Activated T-helper 1 cell treated with anti-CD3 and anti-CD28 coated beads, Interleukin-12 subunit alpha, Interleukin-12 subunit beta, Interleukin-2, Interleukin-4 antibody, amounts not matched to agents 30 ng/mL and 10 ng/mL and 1 ng/mL, durations not matched to agents 14 hours and 24 hours and 36 hours (primary cell): ENCODE measurements at regions of chr7 and their contacts with region 1.

Region 1: GRCh38 chr7:66075590-66076461 is at the start of gene ASL:
- DNase-seq: peak; percentile 93
- H3K4me3 Mint-ChIP-seq: peak within 1 kb of the TSS; percentile 95
- H3K27ac Mint-ChIP-seq: peak within 1 kb of the TSS; percentile 72
- H3K4me1 Mint-ChIP-seq: peaks cover 19% of the 10 kb centered on the region
- H3K27me3 Mint-ChIP-seq: peaks cover 3% of the 10 kb centered on the region
- total RNA-seq, gene ASL: 36.6 and 44.9 TPM in 2 replicates

Region 2: GRCh38 chr7:65750511-65751344 is 325.1 kb before region 1 on chr7:
- intact Hi-C with region 1: loop called (anchors 1 kb)
- DNase-seq: peak; percentile 89
- H3K4me3 Mint-ChIP-seq: peak overlapping the region; percentile 100
- H3K27ac Mint-ChIP-seq: peak overlapping the region; percentile 97
- H3K4me1 Mint-ChIP-seq: peaks cover 11% of the 10 kb centered on the region
- H3K27me3 Mint-ChIP-seq: no peaks in the 10 kb centered on the region

Region 3: GRCh38 chr7:65872776-65873581 is 202.8 kb before region 1 on chr7 and contains the start of gene VKORC1L1:
- intact Hi-C with region 1: loop called (anchors 1 kb)
- DNase-seq: peak; percentile 92
- H3K4me3 Mint-ChIP-seq: peak within 1 kb of the TSS; percentile 85
- H3K27ac Mint-ChIP-seq: peak within 1 kb of the TSS; percentile 73
- H3K4me1 Mint-ChIP-seq: peaks cover 4% of the 10 kb centered on the region
- H3K27me3 Mint-ChIP-seq: no peaks in the 10 kb centered on the region
- total RNA-seq, gene VKORC1L1: 28.8 and 30.1 TPM in 2 replicates

Region 4: GRCh38 chr7:65981965-65982792 is 93.6 kb before region 1 on chr7 and contains the start of gene GUSB:
- intact Hi-C with region 1: loop called (anchors 1 kb)
- DNase-seq: peak; percentile 88
- H3K4me3 Mint-ChIP-seq: peak within 1 kb of the TSS; percentile 87
- H3K27ac Mint-ChIP-seq: peak within 1 kb of the TSS; percentile 90
- H3K4me1 Mint-ChIP-seq: peaks cover 7% of the 10 kb centered on the region
- H3K27me3 Mint-ChIP-seq: no peaks in the 10 kb centered on the region
- total RNA-seq, gene GUSB: 49.7 and 50.1 TPM in 2 replicates

Region 5: GRCh38 chr7:66114793-66115649 is 39.2 kb after region 1 on chr7 and contains the start of gene CRCP:
- intact Hi-C with region 1: loop called (anchors 1 kb)
- DNase-seq: peak; percentile 79
- H3K4me3 Mint-ChIP-seq: peak within 1 kb of the TSS; percentile 99
- H3K27ac Mint-ChIP-seq: peak within 1 kb of the TSS; percentile 95
- H3K4me1 Mint-ChIP-seq: peaks cover 40% of the 10 kb centered on the region
- H3K27me3 Mint-ChIP-seq: no peaks in the 10 kb centered on the region
- total RNA-seq, gene CRCP: 41.0 and 44.1 TPM in 2 replicates

Region 6: DNA sequence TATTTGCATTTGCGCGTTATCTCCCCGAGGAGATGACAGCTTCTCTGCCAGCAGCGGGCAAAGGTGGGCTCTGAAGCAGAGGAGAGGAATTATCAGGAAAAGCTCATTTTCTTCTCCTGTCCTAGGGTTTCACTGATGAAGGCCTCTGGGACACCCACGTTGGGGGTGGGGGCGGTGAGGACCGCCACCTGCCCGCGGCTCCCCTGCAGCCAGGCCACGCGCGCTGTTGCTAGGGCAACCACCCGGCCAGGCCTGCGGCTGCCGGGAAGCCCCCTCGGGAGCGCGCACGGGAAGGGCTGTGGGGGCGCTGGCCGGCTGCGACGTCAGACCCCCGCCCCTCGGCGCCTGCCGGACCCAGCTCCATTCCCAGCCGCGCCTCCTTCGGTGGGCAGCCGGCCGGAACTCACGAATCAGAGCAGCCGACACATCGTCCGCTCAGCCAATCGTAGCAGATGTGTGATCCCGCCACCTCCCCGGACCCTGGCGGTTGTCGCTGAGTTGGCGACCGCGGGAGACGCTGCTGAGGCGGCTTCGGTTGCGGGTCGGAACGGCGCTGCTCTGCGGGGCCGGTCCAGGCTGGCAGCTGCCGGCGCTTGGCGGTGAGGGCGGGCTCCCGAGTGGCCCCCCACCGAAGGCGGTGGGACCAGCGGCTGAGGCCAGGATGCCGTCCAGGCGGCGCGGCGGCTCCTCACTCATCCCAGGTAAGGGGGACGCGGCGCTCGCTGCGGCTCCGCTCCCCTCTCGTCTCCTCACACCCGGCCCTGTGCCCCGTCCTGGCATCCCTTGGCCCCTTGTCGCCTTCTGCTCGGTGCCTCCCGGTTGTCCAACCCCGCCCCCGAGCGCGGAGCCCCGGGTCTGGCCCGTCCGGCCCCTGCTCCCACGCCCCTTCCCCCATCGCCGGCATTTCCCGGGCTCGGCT is 129.3 kb after region 1 on chr7 and contains the start of gene TPST1:
- intact Hi-C with region 1: loop called (anchors 2 kb)
- DNase-seq: peak; percentile 77
- H3K4me3 Mint-ChIP-seq: peak within 1 kb of the TSS; percentile 92
- H3K27ac Mint-ChIP-seq: peak within 1 kb of the TSS; percentile 49
- H3K4me1 Mint-ChIP-seq: peaks cover 29% of the 10 kb centered on the region
- H3K27me3 Mint-ChIP-seq: peaks cover 36% of the 10 kb centered on the region
- total RNA-seq, gene TPST1: 1.6 and 1.8 TPM in 2 replicates

Region 7: GRCh38 chr7:66221442-66221841 is 145.6 kb after region 1 on chr7:
- intact Hi-C with region 1: no loop called
- DNase-seq: no peak
- H3K4me3 Mint-ChIP-seq: no peak overlapping the region
- H3K27ac Mint-ChIP-seq: no peak overlapping the region
- H3K4me1 Mint-ChIP-seq: no peaks in the 10 kb centered on the region
- H3K27me3 Mint-ChIP-seq: no peaks in the 10 kb centered on the region

Region 8: DNA sequence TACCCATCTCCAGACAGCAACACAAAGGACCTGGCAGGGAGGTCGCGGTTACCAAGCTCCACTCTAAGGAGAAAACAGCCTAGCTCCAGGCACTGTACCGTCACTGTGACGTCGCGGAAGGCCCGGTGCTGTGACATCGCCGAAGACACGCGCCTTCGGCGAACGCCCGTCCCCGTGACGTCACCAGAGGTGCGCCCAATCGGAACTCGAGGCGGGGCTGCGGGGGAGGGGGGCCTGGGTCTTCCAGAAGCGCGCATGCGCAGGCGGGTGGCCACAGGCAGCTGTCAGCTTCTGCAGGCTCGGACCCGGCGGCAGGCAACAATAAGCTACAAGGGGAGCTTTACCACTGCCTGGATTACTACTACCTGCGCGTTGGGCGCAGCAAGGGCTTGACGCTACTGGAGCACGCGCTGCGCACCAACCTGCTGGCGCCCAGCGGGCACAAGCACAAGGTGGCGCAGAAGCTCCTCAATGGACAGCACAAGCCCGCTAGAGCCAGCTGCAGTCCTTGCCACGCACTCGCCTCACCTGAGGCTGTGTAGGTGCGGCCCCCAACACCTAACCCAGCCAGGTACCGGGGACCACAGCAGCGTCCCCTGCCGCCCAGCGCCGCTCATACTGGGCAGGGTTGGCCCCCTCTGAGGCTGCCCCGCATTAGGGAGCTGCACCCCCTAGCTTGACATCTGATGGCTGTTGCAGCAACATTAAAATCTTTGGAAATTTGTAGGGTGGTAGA is 337.7 kb after region 1 on chr7:
- intact Hi-C with region 1: loop called (anchors 1 kb)
- DNase-seq: peak; percentile 80
- H3K4me3 Mint-ChIP-seq: peak overlapping the region; percentile 72
- H3K27ac Mint-ChIP-seq: peak overlapping the region; percentile 40
- H3K4me1 Mint-ChIP-seq: peaks cover 7% of the 10 kb centered on the region
- H3K27me3 Mint-ChIP-seq: no peaks in the 10 kb centered on the region